ENCODE measurements at regions of chr11 and their contacts with region 1.

Region 1: GRCh38 chr11:65868076-65868667 is 4.4 kb downstream of the EFEMP2 start:
- DNase-seq: no peak
- H3K4me3 Mint-ChIP-seq: no peak overlapping the region
- H3K27ac Mint-ChIP-seq: no peak overlapping the region
- H3K4me1 Mint-ChIP-seq: peaks cover 11% of the 10 kb centered on the region
- H3K27me3 Mint-ChIP-seq: no peaks in the 10 kb centered on the region

Region 2: GRCh38 chr11:65850831-65851811 is 17.1 kb before region 1 on chr11:
- CTCF ChIA-PET with region 1: no interaction called
- POLR2A ChIA-PET with region 1: interaction called, 15 read pairs
- intact Hi-C with region 1: no loop called
- DNase-seq: peak; percentile 24
- H3K4me3 Mint-ChIP-seq: no peak overlapping the region
- H3K27ac Mint-ChIP-seq: no peak overlapping the region
- H3K4me1 Mint-ChIP-seq: peaks cover 22% of the 10 kb centered on the region
- H3K27me3 Mint-ChIP-seq: no peaks in the 10 kb centered on the region

Measured in activated CD4-positive, alpha-beta memory T cell treated with anti-CD3 and anti-CD28 coated beads for 36 hours (primary cell).